ENCODE measurements at regions of chr17 and their contacts with region 1.

Region 1: GRCh38 chr17:3913531-3914311 is 2.5 kb downstream of the P2RX1 start:
- DNase-seq: peak; percentile 81 to 89
- ATAC-seq: peak; percentile 59 to 85 (median 70)
- H3K4me3 ChIP-seq: peak overlapping the region; percentile 7
- H3K4me3 Mint-ChIP-seq: peak overlapping the region; percentile 47
- H3K27ac ChIP-seq: peak overlapping the region; percentile 92
- H3K27ac Mint-ChIP-seq: peak overlapping the region; percentile 23 to 59
- H3K4me1 ChIP-seq: peaks cover 66% of the 10 kb centered on the region
- H3K4me1 Mint-ChIP-seq: peaks cover 33 to 44% of the 10 kb centered on the region in 2 donors
- H3K27me3 ChIP-seq: no peaks in the 10 kb centered on the region
- H3K27me3 Mint-ChIP-seq: peaks cover 0 to 13% of the 10 kb centered on the region in 2 donors
- CTCF ChIP-seq: peak; percentile 98

Region 2: GRCh38 chr17:3859940-3860339 is 53.8 kb before region 1 on chr17:
- intact Hi-C with region 1: loop called (anchors 5 kb)
- DNase-seq: no peak
- ATAC-seq: no peak
- H3K4me3 ChIP-seq: no peak overlapping the region
- H3K4me3 Mint-ChIP-seq: no peak overlapping the region
- H3K27ac ChIP-seq: no peak overlapping the region
- H3K27ac Mint-ChIP-seq: no peak overlapping the region
- H3K4me1 ChIP-seq: no peaks in the 10 kb centered on the region
- H3K4me1 Mint-ChIP-seq: no peaks in the 10 kb centered on the region
- H3K27me3 ChIP-seq: no peaks in the 10 kb centered on the region
- H3K27me3 Mint-ChIP-seq: no peaks in the 10 kb centered on the region
- CTCF ChIP-seq: no peak

Region 3: GRCh38 chr17:3944485-3945388 is 31.0 kb after region 1 on chr17:
- intact Hi-C with region 1: no loop called
- DNase-seq: peak; percentile 42 to 56
- ATAC-seq: peak; percentile 75 to 97 (median 90)
- H3K4me3 ChIP-seq: no peak overlapping the region
- H3K4me3 Mint-ChIP-seq: no peak overlapping the region
- H3K27ac ChIP-seq: no peak overlapping the region
- H3K27ac Mint-ChIP-seq: peak overlapping the region in 1 of 2 donors; percentile 77
- H3K4me1 ChIP-seq: no peaks in the 10 kb centered on the region
- H3K4me1 Mint-ChIP-seq: peaks cover 4 to 20% of the 10 kb centered on the region in 2 donors
- H3K27me3 ChIP-seq: no peaks in the 10 kb centered on the region
- H3K27me3 Mint-ChIP-seq: no peaks in the 10 kb centered on the region
- CTCF ChIP-seq: no peak

Region 4: GRCh38 chr17:4004517-4005295 is 91.0 kb after region 1 on chr17:
- intact Hi-C with region 1: loop called (anchors 1 kb)
- DNase-seq: peak; percentile 63 to 77
- ATAC-seq: peak; percentile 70 to 84 (median 81)
- H3K4me3 ChIP-seq: no peak overlapping the region
- H3K4me3 Mint-ChIP-seq: no peak overlapping the region
- H3K27ac ChIP-seq: no peak overlapping the region
- H3K27ac Mint-ChIP-seq: no peak overlapping the region
- H3K4me1 ChIP-seq: peaks cover 10% of the 10 kb centered on the region
- H3K4me1 Mint-ChIP-seq: peaks cover 0 to 12% of the 10 kb centered on the region in 2 donors
- H3K27me3 ChIP-seq: no peaks in the 10 kb centered on the region
- H3K27me3 Mint-ChIP-seq: peaks cover 0 to 3% of the 10 kb centered on the region in 2 donors
- CTCF ChIP-seq: peak; percentile 97

Region 5: GRCh38 chr17:4074831-4075495 is 161.2 kb after region 1 on chr17:
- intact Hi-C with region 1: loop called (anchors 1 kb)
- DNase-seq: peak in 1 of 2 donors; percentile 80
- ATAC-seq: peak; percentile 65 to 72 (median 69)
- H3K4me3 ChIP-seq: no peak overlapping the region
- H3K4me3 Mint-ChIP-seq: no peak overlapping the region
- H3K27ac ChIP-seq: no peak overlapping the region
- H3K27ac Mint-ChIP-seq: peak overlapping the region in 1 of 2 donors; percentile 50
- H3K4me1 ChIP-seq: no peaks in the 10 kb centered on the region
- H3K4me1 Mint-ChIP-seq: no peaks in the 10 kb centered on the region
- H3K27me3 ChIP-seq: no peaks in the 10 kb centered on the region
- H3K27me3 Mint-ChIP-seq: no peaks in the 10 kb centered on the region
- CTCF ChIP-seq: peak; percentile 62

Measured in natural killer cell (primary cell).